Endothelial cell of umbilical vein (primary cell): ENCODE measurements at regions of chr6 and their contacts with region 1.

Region 1: GRCh38 chr6:38671885-38672467 is 31.0 kb downstream of the GLO1 start:
- DNase-seq: peak; percentile 60
- H3K4me3 ChIP-seq: no peak overlapping the region
- H3K27ac ChIP-seq: no peak overlapping the region
- H3K4me1 ChIP-seq: peaks cover 15% of the 10 kb centered on the region
- H3K27me3 ChIP-seq: no peaks in the 10 kb centered on the region
- CTCF ChIP-seq: peak; percentile 55 to 60
- POLR2A ChIP-seq: no peak

Region 2: DNA sequence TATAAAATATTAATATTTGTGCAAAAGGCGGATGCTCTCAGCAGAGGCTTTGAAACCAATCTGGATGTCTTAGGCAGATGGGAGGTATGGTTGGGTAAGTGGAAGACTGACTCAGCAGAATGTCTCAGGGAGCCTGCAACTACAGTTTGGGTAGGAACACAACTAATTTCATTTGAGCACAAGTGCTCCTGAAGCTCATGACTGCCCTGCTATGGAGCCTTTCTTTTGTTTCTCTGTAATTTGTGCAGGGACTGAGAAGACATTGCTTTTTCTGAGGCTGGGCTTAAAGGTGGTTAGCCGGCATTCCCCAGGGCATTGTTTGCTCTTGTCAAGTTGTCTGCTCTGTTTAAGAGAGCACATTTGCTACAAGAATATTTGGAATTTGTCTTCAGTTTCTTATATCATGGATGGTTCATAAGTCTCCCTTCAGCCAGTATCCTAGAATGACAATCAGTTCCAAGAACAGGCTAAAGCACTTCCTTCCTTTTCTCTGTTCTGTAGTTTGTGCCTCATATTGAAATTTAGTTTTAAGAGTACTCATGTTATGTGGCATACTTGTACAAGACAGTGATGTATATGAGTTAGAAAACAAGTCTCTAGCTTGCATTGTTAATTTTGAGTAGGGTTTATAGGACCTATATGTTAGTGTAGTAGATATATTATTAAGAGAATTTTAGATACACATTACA is 644.1 kb before region 1 on chr6:
- CTCF ChIA-PET with region 1: no interaction called
- POLR2A ChIA-PET with region 1: no interaction called
- dilution Hi-C with region 1: no loop called
- intact Hi-C with region 1: loop called (anchors 10 kb)
- DNase-seq: peak; percentile 22
- H3K4me3 ChIP-seq: no peak overlapping the region
- H3K27ac ChIP-seq: no peak overlapping the region
- H3K4me1 ChIP-seq: peaks cover 6% of the 10 kb centered on the region
- H3K27me3 ChIP-seq: no peaks in the 10 kb centered on the region
- CTCF ChIP-seq: no peak
- POLR2A ChIP-seq: no peak

Region 3: DNA sequence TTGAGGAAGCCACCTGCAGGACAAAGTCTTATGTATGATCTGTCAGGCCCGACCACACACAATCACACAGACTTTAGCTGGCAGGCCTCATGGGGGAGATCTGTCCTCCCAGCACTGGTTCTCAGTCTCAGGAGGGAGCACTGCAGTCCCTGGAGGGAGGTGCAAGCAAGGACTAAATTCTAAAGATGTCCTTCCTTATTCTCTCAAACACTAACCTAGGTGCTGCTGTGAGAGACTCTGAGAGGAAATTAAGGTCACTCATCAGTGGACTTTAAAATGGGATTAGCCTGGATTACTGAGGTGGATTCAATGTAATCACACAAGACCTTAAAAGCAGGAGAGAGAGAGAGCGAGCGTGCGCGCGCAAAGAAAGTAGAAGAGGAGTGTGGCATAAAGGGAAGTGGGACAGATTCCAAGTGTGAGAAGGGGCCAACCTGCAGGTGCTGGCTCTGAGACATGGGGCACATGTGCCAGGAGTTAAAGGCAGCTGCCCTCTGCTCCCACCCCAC is 16.7 kb after region 1 on chr6:
- CTCF ChIA-PET with region 1: no interaction called
- POLR2A ChIA-PET with region 1: no interaction called
- dilution Hi-C with region 1: no loop called
- intact Hi-C with region 1: no loop called
- DNase-seq: no peak
- H3K4me3 ChIP-seq: no peak overlapping the region
- H3K27ac ChIP-seq: no peak overlapping the region
- H3K4me1 ChIP-seq: no peaks in the 10 kb centered on the region
- H3K27me3 ChIP-seq: no peaks in the 10 kb centered on the region
- CTCF ChIP-seq: no peak
- POLR2A ChIP-seq: no peak

Region 4: DNA sequence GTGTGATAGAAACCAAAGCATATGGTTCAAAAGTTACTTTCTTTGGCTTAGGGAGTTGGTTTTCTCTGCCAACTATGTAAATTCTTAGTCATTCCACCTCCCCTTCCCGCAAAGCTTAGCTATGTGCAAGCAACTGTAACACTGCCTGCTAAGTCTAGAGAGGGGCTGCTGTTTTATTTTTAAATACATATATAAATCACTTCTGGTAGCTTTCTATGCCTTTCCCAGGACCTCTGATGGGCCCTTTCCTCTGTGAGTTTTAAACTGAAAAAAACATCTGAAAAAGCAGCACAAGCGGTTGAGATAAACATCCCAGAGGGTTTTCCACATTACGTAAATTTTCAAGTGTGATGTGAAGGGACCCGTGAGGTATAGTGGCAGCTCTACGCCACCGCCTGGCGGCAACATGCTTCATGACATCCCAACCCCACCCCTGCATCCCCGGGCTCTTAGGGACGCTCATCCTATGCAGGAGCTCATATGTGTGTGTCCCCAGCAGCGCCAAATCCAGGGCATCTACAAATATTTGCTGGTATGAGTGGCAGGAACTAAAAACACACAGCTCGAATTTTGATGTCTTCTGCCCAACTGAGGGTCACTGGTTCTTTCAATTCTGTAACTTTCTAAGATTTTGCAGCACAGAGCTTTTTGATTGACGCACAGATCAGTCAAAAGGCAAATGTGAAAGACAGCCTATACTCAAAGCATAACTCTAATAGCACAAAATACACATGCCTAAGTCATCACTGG is 430.3 kb after region 1 on chr6:
- CTCF ChIA-PET with region 1: no interaction called
- POLR2A ChIA-PET with region 1: no interaction called
- dilution Hi-C with region 1: no loop called
- intact Hi-C with region 1: no loop called
- DNase-seq: peak; percentile 9
- H3K4me3 ChIP-seq: no peak overlapping the region
- H3K27ac ChIP-seq: no peak overlapping the region
- H3K4me1 ChIP-seq: no peaks in the 10 kb centered on the region
- H3K27me3 ChIP-seq: peaks cover 0 to 5% of the 10 kb centered on the region in 2 experiments
- CTCF ChIP-seq: peak; percentile 7 to 18
- POLR2A ChIP-seq: no peak